ENCODE measurements at regions of chr1 and their contacts with region 1.

Region 1: GRCh38 chr1:1040004-1040991 is 20.4 kb downstream of the AGRN start:
- DNase-seq: peak; percentile 90
- ATAC-seq: peak; percentile 89
- H3K4me3 Mint-ChIP-seq: peak overlapping the region; percentile 49
- H3K27ac Mint-ChIP-seq: peak overlapping the region; percentile 58
- H3K4me1 Mint-ChIP-seq: peaks cover 27% of the 10 kb centered on the region
- H3K27me3 Mint-ChIP-seq: peaks cover 2% of the 10 kb centered on the region

Region 2: GRCh38 chr1:983799-984473 is 56.4 kb before region 1 on chr1:
- CTCF ChIA-PET with region 1: interaction called, 11 read pairs
- POLR2A ChIA-PET with region 1: no interaction called
- DNase-seq: peak; percentile 68
- ATAC-seq: peak; percentile 80
- H3K4me3 Mint-ChIP-seq: no peak overlapping the region
- H3K27ac Mint-ChIP-seq: no peak overlapping the region
- H3K4me1 Mint-ChIP-seq: no peaks in the 10 kb centered on the region
- H3K27me3 Mint-ChIP-seq: peaks cover 23% of the 10 kb centered on the region

Region 3: GRCh38 chr1:999725-1000356 is 40.5 kb before region 1 on chr1 and contains the start of gene HES4:
- CTCF ChIA-PET with region 1: interaction called, 10 read pairs
- POLR2A ChIA-PET with region 1: no interaction called
- DNase-seq: peak; percentile 60
- ATAC-seq: peak; percentile 36
- H3K4me3 Mint-ChIP-seq: peak within 1 kb of the TSS; percentile 65
- H3K27ac Mint-ChIP-seq: peak within 1 kb of the TSS; percentile 74
- H3K4me1 Mint-ChIP-seq: peaks cover 29% of the 10 kb centered on the region
- H3K27me3 Mint-ChIP-seq: peaks cover 36% of the 10 kb centered on the region
- total RNA-seq, gene HES4: 0.45 to 0.50 TPM

Region 4: DNA sequence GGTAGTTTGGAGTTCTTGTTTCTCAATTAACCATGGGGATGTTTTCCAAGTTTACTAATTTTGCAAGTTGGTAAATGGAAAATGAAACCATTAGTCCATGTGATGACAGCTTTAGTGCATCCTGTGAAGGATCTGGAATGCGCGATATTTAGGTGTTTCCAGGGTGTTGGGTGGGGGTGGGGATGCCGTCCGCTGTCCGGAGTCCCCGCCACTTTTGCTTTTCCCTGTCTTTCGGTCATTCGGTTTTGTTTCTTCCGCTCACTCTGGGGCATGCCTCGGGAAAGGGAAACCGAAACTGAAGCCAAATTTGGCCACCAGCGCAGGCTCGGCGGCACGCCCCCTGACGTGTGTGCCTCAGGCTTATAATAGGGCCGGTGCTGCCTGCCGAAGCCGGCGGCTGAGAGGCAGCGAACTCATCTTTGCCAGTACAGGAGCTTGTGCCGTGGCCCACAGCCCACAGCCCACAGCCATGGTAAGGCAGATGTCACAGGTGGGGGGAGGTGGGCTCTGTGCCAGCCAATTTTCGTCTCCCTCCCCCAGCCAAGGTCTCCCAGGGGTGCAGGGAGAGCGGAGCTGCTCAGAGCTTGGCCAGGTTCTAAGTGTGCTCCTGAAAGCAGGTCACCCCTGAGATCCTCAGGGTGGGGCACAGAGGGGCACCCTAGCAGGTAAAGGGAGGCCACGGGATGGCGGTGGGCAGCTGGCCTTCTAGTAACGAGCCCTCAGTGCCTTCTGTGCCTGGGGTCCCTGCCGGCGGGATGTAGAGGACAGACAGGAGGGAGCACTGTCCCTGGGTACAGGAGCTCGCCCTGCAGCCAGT is 27.0 kb before region 1 on chr1 and contains the start of gene ISG15:
- CTCF ChIA-PET with region 1: interaction called, 9 read pairs
- POLR2A ChIA-PET with region 1: interaction called, 18 read pairs
- DNase-seq: peak; percentile 95
- ATAC-seq: peak; percentile 90
- H3K4me3 Mint-ChIP-seq: peak within 1 kb of the TSS; percentile 97
- H3K27ac Mint-ChIP-seq: peak within 1 kb of the TSS; percentile 99
- H3K4me1 Mint-ChIP-seq: peaks cover 49% of the 10 kb centered on the region
- H3K27me3 Mint-ChIP-seq: peaks cover 4% of the 10 kb centered on the region
- total RNA-seq, gene ISG15: 385 to 413 TPM

Measured in activated CD8-positive, alpha-beta T cell treated with anti-CD3 and anti-CD28 coated beads, Interleukin-2, amount 10 ng/mL, durations not matched to agents 7 days and 5 days (primary cell).